Left cardiac atrium (tissue), 4 donors: ENCODE measurements at regions of chr12 and their contacts with region 1.

Region 1: GRCh38 chr12:25958428-25959070 is at the start of gene RASSF8:
- DNase-seq: peak; percentile 85
- ATAC-seq: peak; percentile 84 to 94
- total RNA-seq, gene RASSF8: 60.0 to 81.4 TPM

Region 2: GRCh38 chr12:24979329-24979728 is 979.2 kb before region 1 on chr12:
- intact Hi-C with region 1: no loop called
- DNase-seq: no peak
- ATAC-seq: peak in 1 of 2 donors; percentile 61

Region 3: GRCh38 chr12:25583545-25583944 is 375.0 kb before region 1 on chr12:
- intact Hi-C with region 1: loop called in 1 of 2 experiments (anchors 10 kb)
- DNase-seq: peak; percentile 41
- ATAC-seq: peak; percentile 92 to 96

Region 4: DNA sequence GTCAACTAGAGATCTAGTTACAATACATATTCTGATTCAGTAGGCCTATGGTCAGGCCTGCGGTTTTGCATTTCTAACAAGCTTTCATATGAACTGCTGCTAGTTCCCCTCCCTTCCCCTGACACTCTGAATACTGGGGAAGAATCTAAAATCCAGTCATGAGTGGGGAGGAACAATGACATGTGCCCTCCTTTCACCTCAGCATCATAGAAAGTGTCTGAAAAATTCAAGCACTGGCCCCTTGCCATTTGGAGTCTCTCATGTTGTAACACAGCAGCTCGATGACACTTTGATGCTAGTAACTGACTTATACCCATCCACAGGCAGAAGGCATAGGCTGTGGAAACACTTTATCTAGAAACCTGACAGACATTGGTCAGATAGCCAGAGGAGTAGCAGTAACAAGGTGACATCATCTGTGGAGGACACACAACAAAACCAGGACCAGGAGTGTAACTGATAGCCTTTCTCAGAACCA is 162.0 kb before region 1 on chr12:
- intact Hi-C with region 1: loop called in 1 of 2 experiments (anchors 5 kb)
- DNase-seq: peak; percentile 28
- ATAC-seq: peak; percentile 86 to 90

Region 5: GRCh38 chr12:25811656-25812126 is 146.9 kb before region 1 on chr12:
- intact Hi-C with region 1: no loop called
- DNase-seq: no peak
- ATAC-seq: no peak

Region 6: GRCh38 chr12:25997201-25997963 is 38.8 kb after region 1 on chr12:
- intact Hi-C with region 1: no loop called
- DNase-seq: no peak
- ATAC-seq: peak; percentile 43 to 45

Region 7: DNA sequence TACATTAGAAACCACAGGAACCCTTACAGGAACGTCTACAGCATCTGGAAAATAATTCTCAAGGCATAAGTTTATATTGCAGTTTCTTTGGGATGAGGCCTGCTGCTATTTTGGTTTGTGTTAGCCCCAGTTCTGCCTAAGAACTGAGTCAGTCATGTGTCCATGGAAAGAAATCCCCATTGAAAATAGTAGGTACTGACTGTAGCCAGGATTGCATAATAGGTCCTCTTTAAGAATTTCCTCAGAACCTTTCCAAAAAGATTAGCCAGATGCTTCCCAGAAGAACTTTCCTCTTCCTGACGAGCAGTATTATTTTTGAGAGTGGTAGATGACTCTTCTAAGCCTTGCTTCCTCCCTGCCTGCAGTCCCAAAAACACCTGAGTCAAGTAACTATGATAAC is 52.5 kb after region 1 on chr12:
- intact Hi-C with region 1: loop called in 1 of 2 experiments (anchors 2 kb)
- DNase-seq: no peak
- ATAC-seq: peak; percentile 87 to 88

Region 8: DNA sequence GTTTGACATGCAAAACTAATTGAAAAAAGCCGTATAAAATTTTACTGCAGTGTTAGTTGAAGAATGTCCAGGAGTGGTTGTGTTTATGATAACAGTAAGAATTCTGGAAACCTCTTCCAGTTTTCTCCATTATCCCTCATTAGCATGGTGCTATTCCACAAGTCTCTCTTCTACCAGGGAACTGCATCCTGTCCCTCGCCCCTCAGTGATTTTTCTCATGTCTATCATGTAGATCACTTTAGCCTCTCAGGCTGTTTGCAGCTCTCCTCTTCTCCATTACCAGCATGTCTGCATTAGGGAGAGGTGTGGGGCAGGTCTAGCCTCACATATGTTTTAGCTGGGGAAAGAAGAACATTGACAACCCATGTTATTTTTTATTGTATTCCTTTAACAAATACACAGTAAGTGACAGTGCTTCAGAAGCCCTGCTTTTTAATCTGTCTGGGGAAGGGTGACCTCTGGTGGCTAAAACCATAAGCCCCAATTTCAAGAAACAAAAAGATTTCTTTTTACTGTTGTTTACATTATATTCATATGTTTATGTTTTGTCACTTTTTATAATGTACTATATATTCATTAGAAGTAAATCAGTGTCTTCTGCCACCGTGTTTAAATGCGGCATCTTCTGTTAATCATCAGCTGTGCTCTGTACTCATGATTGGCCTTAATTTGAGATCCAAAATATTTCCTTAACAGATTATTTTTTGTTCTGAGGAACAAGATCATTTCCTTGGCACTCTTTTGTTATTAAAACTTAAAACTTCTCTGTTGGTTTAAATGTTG is 70.6 kb after region 1 on chr12:
- intact Hi-C with region 1: loop called in 1 of 2 experiments (anchors 2 kb)
- DNase-seq: no peak
- ATAC-seq: peak; percentile 64 to 74